A549 (cell line): ENCODE measurements at regions of chr17 and their contacts with region 1.

Region 1: GRCh38 chr17:57597531-57598453 is 147.3 kb downstream of the CCDC182 start:
- DNase-seq: peak; percentile 82 to 86
- ATAC-seq: peak; percentile 85 to 93
- H3K4me3 ChIP-seq: no peak overlapping the region
- H3K27ac ChIP-seq: peak overlapping the region; percentile 46 to 54; a peak in 5 of 6 replicates
- H3K4me1 ChIP-seq: peaks cover 15% of the 10 kb centered on the region
- CTCF ChIP-seq: peak; percentile 97
- EP300 ChIP-seq: no peak
- POLR2A ChIP-seq: no peak
- RAD21 ChIP-seq: peak; percentile 86 to 87

Region 2: DNA sequence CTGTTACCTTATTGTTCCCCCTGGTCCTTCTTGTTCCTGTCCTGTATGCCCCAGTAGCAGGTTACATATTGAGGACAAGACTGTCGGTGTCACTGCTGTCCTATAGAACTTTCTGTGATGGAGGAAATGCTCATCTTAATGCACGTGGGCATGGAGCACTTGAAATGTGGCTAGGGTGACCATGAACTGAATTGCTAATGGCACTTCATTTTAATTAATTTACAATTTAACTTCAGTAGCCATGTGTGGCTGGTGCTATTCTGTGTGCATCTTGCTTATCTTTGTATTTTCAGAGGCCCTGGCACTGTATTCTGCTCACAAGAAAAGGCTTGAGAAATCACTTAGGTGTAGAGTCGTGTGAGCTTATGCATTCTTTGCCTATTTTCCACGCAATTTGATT is 216.3 kb before region 1 on chr17:
- CTCF ChIA-PET with region 1: no interaction called
- POLR2A ChIA-PET with region 1: no interaction called
- DNase-seq: no peak
- ATAC-seq: no peak
- H3K4me3 ChIP-seq: no peak overlapping the region
- H3K27ac ChIP-seq: peak overlapping the region in 1 of 2 experiments; percentile 4; a peak in 1 of 6 replicates
- H3K4me1 ChIP-seq: peaks cover 31% of the 10 kb centered on the region
- CTCF ChIP-seq: no peak
- EP300 ChIP-seq: no peak
- POLR2A ChIP-seq: no peak
- RAD21 ChIP-seq: no peak

Region 3: GRCh38 chr17:57552114-57552624 is 45.6 kb before region 1 on chr17:
- CTCF ChIA-PET with region 1: interaction called, 14 read pairs
- POLR2A ChIA-PET with region 1: no interaction called
- DNase-seq: no peak
- ATAC-seq: peak in 1 of 2 experiments; percentile 26; a peak in 2 of 6 replicates
- H3K4me3 ChIP-seq: no peak overlapping the region
- H3K27ac ChIP-seq: no peak overlapping the region
- H3K4me1 ChIP-seq: peaks cover 32% of the 10 kb centered on the region
- CTCF ChIP-seq: no peak; the same call in 2 of the 3 replicates
- EP300 ChIP-seq: no peak
- POLR2A ChIP-seq: no peak
- RAD21 ChIP-seq: no peak

Region 4: GRCh38 chr17:57615836-57616757 is 18.3 kb after region 1 on chr17:
- CTCF ChIA-PET with region 1: interaction called, 63 read pairs
- POLR2A ChIA-PET with region 1: no interaction called
- DNase-seq: no peak
- ATAC-seq: no peak
- H3K4me3 ChIP-seq: no peak overlapping the region
- H3K27ac ChIP-seq: no peak overlapping the region
- H3K4me1 ChIP-seq: no peaks in the 10 kb centered on the region
- CTCF ChIP-seq: no peak
- EP300 ChIP-seq: no peak
- POLR2A ChIP-seq: no peak
- RAD21 ChIP-seq: no peak

Region 5: DNA sequence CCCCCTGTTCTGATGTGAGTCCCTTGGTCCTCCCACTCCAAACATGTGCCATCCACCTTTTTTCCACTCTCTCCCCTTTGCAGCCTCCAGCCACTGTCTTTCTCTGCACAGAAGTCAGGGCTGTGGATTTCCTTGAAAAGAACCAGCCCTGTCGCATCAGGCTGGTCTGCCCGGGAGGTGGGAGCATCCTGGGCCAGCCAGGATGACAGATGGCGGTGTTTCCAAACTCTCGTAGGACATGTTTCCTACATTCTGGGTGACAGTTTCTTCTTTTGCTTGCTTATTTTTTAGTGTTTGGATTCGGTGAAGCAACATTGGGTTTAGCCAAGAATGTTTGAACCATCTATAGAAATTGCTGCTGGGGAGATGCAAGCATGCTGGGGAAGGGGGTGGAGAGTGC is 46.5 kb after region 1 on chr17:
- CTCF ChIA-PET with region 1: interaction called, 11 read pairs
- POLR2A ChIA-PET with region 1: no interaction called
- DNase-seq: no peak
- ATAC-seq: no peak
- H3K4me3 ChIP-seq: no peak overlapping the region
- H3K27ac ChIP-seq: no peak overlapping the region
- H3K4me1 ChIP-seq: peaks cover 5% of the 10 kb centered on the region
- CTCF ChIP-seq: no peak
- EP300 ChIP-seq: no peak
- POLR2A ChIP-seq: no peak
- RAD21 ChIP-seq: no peak

Region 6: GRCh38 chr17:57671667-57672632 is 74.2 kb after region 1 on chr17:
- CTCF ChIA-PET with region 1: interaction called, 104 read pairs
- POLR2A ChIA-PET with region 1: no interaction called
- DNase-seq: peak; percentile 81 to 95
- ATAC-seq: peak; percentile 93 to 99
- H3K4me3 ChIP-seq: no peak overlapping the region
- H3K27ac ChIP-seq: peak overlapping the region; percentile 36 to 48; a peak in 4 of 6 replicates
- H3K4me1 ChIP-seq: peaks cover 14% of the 10 kb centered on the region
- CTCF ChIP-seq: peak; percentile 98
- EP300 ChIP-seq: no peak
- POLR2A ChIP-seq: no peak
- RAD21 ChIP-seq: peak; percentile 93 to 96

Region 7: GRCh38 chr17:58028578-58028977 is 430.8 kb after region 1 on chr17:
- CTCF ChIA-PET with region 1: no interaction called
- POLR2A ChIA-PET with region 1: no interaction called
- DNase-seq: peak in 1 of 2 experiments; percentile 21
- ATAC-seq: no peak
- H3K4me3 ChIP-seq: no peak overlapping the region
- H3K27ac ChIP-seq: no peak overlapping the region
- H3K4me1 ChIP-seq: no peaks in the 10 kb centered on the region
- CTCF ChIP-seq: no peak
- EP300 ChIP-seq: no peak
- POLR2A ChIP-seq: no peak
- RAD21 ChIP-seq: no peak